ENCODE measurements at regions of chr7 and their contacts with region 1.

Region 1: DNA sequence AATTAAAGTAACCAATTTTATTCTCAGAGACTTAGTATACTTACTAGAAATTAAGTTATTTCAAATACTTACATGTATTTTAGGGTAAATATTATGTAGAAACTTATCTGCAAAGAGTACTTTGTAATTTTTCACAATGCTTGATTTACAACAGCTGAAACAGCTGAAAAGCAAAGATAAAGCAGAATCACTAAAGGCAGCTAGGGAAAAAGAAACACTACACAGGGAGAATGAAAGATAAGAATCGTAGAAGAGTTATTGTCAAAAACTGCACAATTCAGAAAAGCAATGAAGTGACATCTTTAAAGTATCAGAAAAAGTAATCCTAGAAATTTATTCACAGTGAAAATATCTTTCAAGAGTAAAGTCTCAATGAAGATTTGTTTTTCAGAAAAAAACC is 69.7 kb upstream of the ZNF804B start:
- DNase-seq: no peak
- CTCF ChIP-seq: no peak

Region 2: GRCh38 chr7:88628363-88629085 is 61.3 kb before region 1 on chr7:
- CTCF ChIA-PET with region 1: no interaction called
- POLR2A ChIA-PET with region 1: no interaction called
- DNase-seq: peak; percentile 26
- CTCF ChIP-seq: no peak

Region 3: DNA sequence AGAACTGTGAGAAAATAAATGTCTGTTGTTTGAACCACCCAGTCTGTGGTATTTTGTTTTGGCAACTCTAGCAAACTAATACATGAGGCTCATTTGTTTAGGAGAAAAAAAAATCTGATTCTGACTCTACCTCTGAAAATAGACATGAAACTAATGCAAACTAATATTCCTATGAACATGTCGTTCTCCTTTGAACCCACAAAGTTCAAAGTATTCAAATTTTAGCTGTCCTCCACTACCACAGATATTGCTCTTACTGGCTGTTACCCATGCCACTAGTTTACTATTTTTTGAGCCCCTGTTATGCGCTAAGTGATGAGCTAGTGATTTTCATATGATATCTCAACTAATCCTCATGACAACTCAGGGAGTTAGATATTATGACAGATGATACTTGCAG is 10.9 kb after region 1 on chr7:
- CTCF ChIA-PET with region 1: interaction called, 10 read pairs
- POLR2A ChIA-PET with region 1: no interaction called
- DNase-seq: no peak
- CTCF ChIP-seq: no peak

Measured in GM10248 (cell line).